Activated CD8-positive, alpha-beta T cell treated with anti-CD3 and anti-CD28 coated beads, Interleukin-2, amount 10 ng/mL, durations not matched to agents 7 days and 5 days (primary cell): ENCODE measurements at regions of chr10 and their contacts with region 1.

Region 1: DNA sequence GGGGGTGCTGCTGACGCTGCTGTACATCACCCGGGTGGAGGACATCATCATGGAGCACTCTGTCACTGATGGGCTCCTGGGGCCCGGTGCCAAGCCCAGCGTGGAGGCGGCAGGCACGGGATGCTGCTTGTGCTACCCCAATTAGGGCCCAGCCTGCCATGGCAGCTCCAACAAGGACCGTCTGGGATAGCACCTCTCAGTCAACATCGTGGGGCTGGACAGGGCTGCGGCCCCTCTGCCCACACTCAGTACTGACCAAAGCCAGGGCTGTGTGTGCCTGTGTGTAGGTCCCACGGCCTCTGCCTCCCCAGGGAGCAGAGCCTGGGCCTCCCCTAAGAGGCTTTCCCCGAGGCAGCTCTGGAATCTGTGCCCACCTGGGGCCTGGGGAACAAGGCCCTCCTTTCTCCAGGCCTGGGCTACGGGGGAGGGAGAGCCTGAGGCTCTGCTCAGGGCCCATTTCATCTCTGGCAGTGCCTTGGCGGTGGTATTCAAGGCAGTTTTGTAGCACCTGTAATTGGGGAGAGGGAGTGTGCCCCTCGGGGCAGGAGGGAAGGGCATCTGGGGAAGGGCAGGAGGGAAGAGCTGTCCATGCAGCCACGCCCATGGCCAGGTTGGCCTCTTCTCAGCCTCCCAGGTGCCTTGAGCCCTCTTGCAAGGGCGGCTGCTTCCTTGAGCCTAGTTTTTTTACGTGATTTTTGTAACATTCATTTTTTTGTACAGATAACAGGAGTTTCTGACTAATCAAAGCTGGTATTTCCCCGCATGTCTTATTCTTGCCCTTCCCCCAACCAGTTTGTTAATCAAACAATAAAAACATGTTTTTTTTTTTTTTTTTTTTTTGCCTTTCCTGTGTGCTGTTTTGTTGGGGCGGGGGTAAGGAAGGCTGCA is 55.8 kb downstream of the TSPAN15 start:
- DNase-seq: no peak
- ATAC-seq: no peak
- H3K4me3 Mint-ChIP-seq: no peak overlapping the region
- H3K27ac Mint-ChIP-seq: peak overlapping the region; percentile 68
- H3K4me1 Mint-ChIP-seq: peaks cover 13% of the 10 kb centered on the region
- H3K27me3 Mint-ChIP-seq: peaks cover 20% of the 10 kb centered on the region

Region 2: GRCh38 chr10:69425511-69426298 is 81.4 kb before region 1 on chr10:
- CTCF ChIA-PET with region 1: interaction called, 29 read pairs
- POLR2A ChIA-PET with region 1: interaction called, 3 read pairs
- DNase-seq: peak; percentile 52
- ATAC-seq: peak; percentile 69
- H3K4me3 Mint-ChIP-seq: no peak overlapping the region
- H3K27ac Mint-ChIP-seq: peak overlapping the region; percentile 79
- H3K4me1 Mint-ChIP-seq: peaks cover 56% of the 10 kb centered on the region
- H3K27me3 Mint-ChIP-seq: peaks cover 5% of the 10 kb centered on the region

Region 3: DNA sequence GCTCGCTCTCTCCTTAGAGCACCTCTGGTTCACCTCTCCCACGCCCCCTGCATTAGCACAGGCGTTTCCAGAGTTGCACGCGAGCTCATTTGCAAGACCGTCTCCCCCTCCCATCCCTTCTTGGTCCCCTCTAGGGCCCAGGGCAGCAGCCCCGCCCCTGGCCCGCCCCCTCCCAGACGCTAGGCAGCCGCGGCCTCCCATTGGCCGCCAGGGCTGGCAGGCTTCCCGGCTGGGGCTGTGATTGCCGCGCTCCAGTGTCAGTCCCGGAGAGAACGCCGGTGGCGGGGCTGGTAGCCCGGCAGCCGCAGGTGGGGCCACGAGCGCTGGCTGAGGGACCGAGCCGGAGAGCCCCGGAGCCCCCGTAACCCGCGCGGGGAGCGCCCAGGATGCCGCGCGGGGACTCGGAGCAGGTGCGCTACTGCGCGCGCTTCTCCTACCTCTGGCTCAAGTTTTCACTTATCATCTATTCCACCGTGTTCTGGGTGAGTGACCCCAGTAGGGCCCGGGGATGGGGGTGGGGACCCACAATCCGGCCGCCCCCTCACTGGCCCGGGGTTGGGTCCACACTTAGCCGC is 55.8 kb before region 1 on chr10 and contains the start of gene TSPAN15:
- CTCF ChIA-PET with region 1: interaction called, 13 read pairs
- POLR2A ChIA-PET with region 1: no interaction called
- DNase-seq: peak; percentile 81
- ATAC-seq: peak; percentile 97
- H3K4me3 Mint-ChIP-seq: peak within 1 kb of the TSS; percentile 85
- H3K27ac Mint-ChIP-seq: no peak within 1 kb of the TSS
- H3K4me1 Mint-ChIP-seq: peaks cover 29% of the 10 kb centered on the region
- H3K27me3 Mint-ChIP-seq: peaks cover 26% of the 10 kb centered on the region
- total RNA-seq, gene TSPAN15: 3.8 to 4.7 TPM